ENCODE measurements at regions of chr2 and their contacts with region 1.

Region 1: DNA sequence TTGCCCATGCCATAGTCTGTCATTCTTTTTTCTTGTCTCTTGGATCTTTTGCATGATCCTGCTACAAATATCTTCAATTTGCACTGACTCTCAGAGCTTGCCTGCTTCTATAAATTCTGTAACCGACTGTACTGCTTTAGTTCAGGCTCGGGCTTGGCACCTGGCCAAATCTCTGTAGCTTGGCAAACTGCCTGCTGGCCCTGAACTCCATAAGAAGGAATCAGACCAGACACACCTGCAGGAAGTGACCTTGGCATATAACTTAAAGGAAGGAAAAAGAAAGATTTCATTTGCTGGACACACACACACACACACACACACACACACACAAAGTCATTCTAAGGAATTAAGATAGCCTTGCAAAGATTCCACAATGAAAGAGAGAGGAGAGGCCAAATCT is 291.2 kb upstream of the DDX18 start:
- DNase-seq: no peak
- H3K4me3 ChIP-seq: no peak overlapping the region
- H3K27ac ChIP-seq: no peak overlapping the region
- H3K4me1 ChIP-seq: no peaks in the 10 kb centered on the region
- H3K27me3 ChIP-seq: no peaks in the 10 kb centered on the region
- CTCF ChIP-seq: no peak
- POLR2A ChIP-seq: no peak

Region 2: DNA sequence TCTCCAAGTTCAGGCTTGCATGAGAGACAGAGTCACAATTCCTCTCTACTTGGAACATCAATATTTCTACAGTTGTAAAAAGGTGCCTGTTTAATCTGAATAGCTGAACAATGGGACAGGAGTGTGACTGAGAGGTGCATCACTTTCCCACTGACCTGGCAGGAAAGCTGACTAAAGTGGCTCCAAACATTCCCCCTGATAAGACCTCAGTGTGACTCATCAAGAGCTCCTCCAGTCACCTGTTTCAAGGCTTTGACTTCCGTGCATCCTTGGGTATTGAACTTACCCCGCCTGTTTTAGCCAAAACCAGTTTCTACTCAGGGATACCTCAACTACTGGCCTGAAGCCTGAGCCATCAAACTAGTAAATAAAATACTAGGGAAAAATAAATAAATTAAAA is 162.7 kb before region 1 on chr2:
- intact Hi-C with region 1: no loop called
- DNase-seq: no peak
- H3K4me3 ChIP-seq: no peak overlapping the region
- H3K27ac ChIP-seq: no peak overlapping the region
- H3K4me1 ChIP-seq: no peaks in the 10 kb centered on the region
- H3K27me3 ChIP-seq: no peaks in the 10 kb centered on the region
- CTCF ChIP-seq: no peak
- POLR2A ChIP-seq: no peak

Region 3: GRCh38 chr2:117703858-117704257 is 180.6 kb after region 1 on chr2:
- intact Hi-C with region 1: no loop called
- DNase-seq: no peak
- H3K4me3 ChIP-seq: no peak overlapping the region
- H3K27ac ChIP-seq: no peak overlapping the region
- H3K4me1 ChIP-seq: no peaks in the 10 kb centered on the region
- H3K27me3 ChIP-seq: no peaks in the 10 kb centered on the region
- CTCF ChIP-seq: no peak
- POLR2A ChIP-seq: no peak

Region 4: GRCh38 chr2:118614841-118615271 is 1091.6 kb after region 1 on chr2:
- intact Hi-C with region 1: loop called (anchors 10 kb)
- DNase-seq: peak in 1 of 2 donors; percentile 46
- H3K4me3 ChIP-seq: no peak overlapping the region
- H3K27ac ChIP-seq: no peak overlapping the region
- H3K4me1 ChIP-seq: no peaks in the 10 kb centered on the region
- H3K27me3 ChIP-seq: no peaks in the 10 kb centered on the region
- CTCF ChIP-seq: no peak
- POLR2A ChIP-seq: no peak